ENCODE measurements at regions of chr14 and their contacts with region 1.

Region 1: DNA sequence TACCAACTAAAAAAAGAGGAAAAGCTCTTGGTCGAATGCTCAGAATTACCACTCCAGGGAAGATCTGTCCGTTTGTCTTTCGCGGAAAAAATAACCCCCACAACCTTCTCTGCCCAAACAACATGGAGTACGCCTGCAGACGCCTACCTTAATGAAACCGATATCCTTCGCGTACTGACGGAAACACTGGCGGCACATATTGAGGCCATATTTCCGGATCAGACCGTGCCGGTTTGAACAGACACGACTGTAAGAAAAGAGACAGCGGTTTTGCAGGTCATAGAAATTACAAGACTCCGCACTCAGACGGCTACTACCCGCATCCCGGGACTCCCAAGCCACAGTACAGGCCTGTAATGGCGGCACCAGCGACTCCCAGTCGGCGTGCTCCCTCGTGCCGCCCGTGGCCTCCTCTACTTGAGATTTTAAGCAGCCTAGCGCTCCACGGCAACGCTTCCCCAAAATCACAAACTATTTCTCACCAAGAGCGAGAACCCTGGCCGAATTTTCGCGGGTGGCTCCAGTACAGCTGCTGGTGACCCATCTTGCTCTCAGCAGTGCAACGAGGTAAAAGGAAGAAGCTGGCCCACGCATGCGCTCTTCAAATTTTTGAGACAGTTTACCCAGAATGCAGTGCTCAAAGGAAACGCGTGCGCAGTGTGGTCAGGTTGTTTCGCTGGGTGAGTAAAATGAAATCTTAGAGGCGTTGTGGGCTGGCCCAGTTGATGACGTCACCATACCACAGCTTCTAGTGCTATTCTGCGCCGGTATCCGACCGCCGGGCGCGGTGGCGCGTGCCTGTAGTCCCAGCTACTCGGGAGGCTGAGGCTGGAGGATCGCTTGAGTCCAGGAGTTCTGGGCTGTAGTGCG is at the start of gene RPS29:
- DNase-seq: peak; percentile 99
- ATAC-seq: peak; percentile 84
- H3K4me3 ChIP-seq: peak within 1 kb of the TSS; percentile 90
- H3K27ac ChIP-seq: peak within 1 kb of the TSS; percentile 99
- H3K4me1 ChIP-seq: no peaks in the 10 kb centered on the region
- H3K27me3 ChIP-seq: no peaks in the 10 kb centered on the region
- CTCF ChIP-seq: no peak
- EP300 ChIP-seq: no peak; a peak in 1 of 4 replicates
- POLR2A ChIP-seq: peak; percentile 91
- RAD21 ChIP-seq: no peak
- polyA plus RNA-seq, gene RPS29: 7,374 to 7,763 TPM

Region 2: DNA sequence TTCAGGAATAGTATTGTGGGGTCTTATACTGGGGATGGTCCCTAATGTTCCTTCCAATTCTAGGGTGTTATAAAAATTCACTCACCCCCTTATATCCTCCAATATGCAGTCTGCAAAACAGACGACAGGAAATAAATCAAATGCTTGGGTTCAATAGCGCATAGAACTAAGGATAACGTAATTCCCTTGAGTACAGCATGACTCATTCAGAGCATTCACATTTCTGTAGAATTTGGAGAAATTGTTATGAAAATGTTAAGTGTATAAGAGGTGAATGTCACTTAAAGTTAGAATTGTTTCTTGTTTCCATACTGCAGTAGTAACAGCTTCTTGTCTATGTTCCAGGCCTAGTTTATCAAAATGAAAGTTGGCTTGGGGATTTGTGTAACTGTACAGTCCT is 271.3 kb before region 1 on chr14:
- CTCF ChIA-PET with region 1: no interaction called
- POLR2A ChIA-PET with region 1: no interaction called
- RAD21 ChIA-PET with region 1: no interaction called
- SMC1A ChIA-PET with region 1: no interaction called
- in situ Hi-C with region 1: no loop called
- intact Hi-C with region 1: no loop called
- DNase-seq: no peak
- ATAC-seq: no peak
- H3K4me3 ChIP-seq: no peak overlapping the region
- H3K27ac ChIP-seq: no peak overlapping the region
- H3K4me1 ChIP-seq: no peaks in the 10 kb centered on the region
- H3K27me3 ChIP-seq: no peaks in the 10 kb centered on the region; a peak in 1 of 4 replicates
- CTCF ChIP-seq: no peak
- EP300 ChIP-seq: no peak
- POLR2A ChIP-seq: no peak
- RAD21 ChIP-seq: no peak

Region 3: GRCh38 chr14:49598485-49599300 is 12.7 kb after region 1 on chr14 and contains the start of gene LRR1:
- CTCF ChIA-PET with region 1: interaction called, 75 read pairs
- POLR2A ChIA-PET with region 1: interaction called, 62 read pairs
- RAD21 ChIA-PET with region 1: interaction called, 27 read pairs
- SMC1A ChIA-PET with region 1: interaction called, 12 read pairs
- in situ Hi-C with region 1: no loop called
- intact Hi-C with region 1: loop called (anchors 1 kb)
- DNase-seq: peak; percentile 60
- ATAC-seq: peak; percentile 66
- H3K4me3 ChIP-seq: peak within 1 kb of the TSS; percentile 92
- H3K27ac ChIP-seq: peak within 1 kb of the TSS; percentile 100
- H3K4me1 ChIP-seq: peaks cover 17% of the 10 kb centered on the region
- H3K27me3 ChIP-seq: no peaks in the 10 kb centered on the region
- CTCF ChIP-seq: no peak
- EP300 ChIP-seq: peak in 1 of 2 experiments; percentile 6; a peak in 1 of 4 replicates
- POLR2A ChIP-seq: peak; percentile 93
- RAD21 ChIP-seq: no peak
- polyA plus RNA-seq, gene LRR1: 63.9 to 110 TPM